AG04450 (cell line): ENCODE measurements at regions of chr17 and their contacts with region 1.

Region 1: GRCh38 chr17:76005263-76006149 is 4.9 kb downstream of the CDK3 start:
- DNase-seq: no peak
- H3K4me3 ChIP-seq: no peak overlapping the region
- H3K27ac ChIP-seq: peak overlapping the region; percentile 31
- H3K27me3 ChIP-seq: no peaks in the 10 kb centered on the region
- CTCF ChIP-seq: peak; percentile 66

Region 2: GRCh38 chr17:75904749-75905521 is 100.6 kb before region 1 on chr17 and contains the start of gene MRPL38:
- CTCF ChIA-PET with region 1: interaction called, 46 read pairs
- POLR2A ChIA-PET with region 1: interaction called, 5 read pairs
- DNase-seq: peak; percentile 80
- H3K4me3 ChIP-seq: peak within 1 kb of the TSS; percentile 75
- H3K27ac ChIP-seq: peak within 1 kb of the TSS; percentile 61
- H3K27me3 ChIP-seq: no peaks in the 10 kb centered on the region
- CTCF ChIP-seq: peak; percentile 83
- polyA plus RNA-seq, gene MRPL38: 16.6 and 21.9 TPM in 2 replicates

Region 3: DNA sequence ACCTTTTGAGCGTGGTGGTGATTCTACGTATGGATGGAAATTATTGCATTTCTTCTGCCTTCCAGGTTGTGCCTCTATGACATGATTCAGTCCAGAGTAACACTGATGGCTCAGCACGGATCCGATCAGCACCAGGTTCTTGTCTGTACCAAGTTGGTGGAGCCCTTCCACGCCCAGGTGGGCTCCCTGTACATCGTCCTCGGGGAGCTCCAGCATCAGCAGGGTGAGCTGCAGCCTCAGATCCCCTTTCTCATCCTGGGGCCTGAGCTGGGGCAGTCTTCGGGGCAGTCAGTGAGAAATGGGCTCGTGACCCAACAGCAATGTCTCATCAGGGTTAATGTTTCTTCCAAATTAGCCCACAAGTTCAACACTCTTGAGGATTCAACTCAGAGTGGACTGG is 14.1 kb before region 1 on chr17:
- CTCF ChIA-PET with region 1: interaction called, 12 read pairs
- POLR2A ChIA-PET with region 1: interaction called, 3 read pairs
- DNase-seq: no peak
- H3K4me3 ChIP-seq: no peak overlapping the region
- H3K27ac ChIP-seq: no peak overlapping the region
- H3K27me3 ChIP-seq: no peaks in the 10 kb centered on the region
- CTCF ChIP-seq: no peak

Region 4: GRCh38 chr17:76065754-76066153 is 60.2 kb after region 1 on chr17:
- CTCF ChIA-PET with region 1: interaction called, 11 read pairs
- POLR2A ChIA-PET with region 1: no interaction called
- DNase-seq: no peak
- H3K4me3 ChIP-seq: no peak overlapping the region
- H3K27ac ChIP-seq: no peak overlapping the region
- H3K27me3 ChIP-seq: no peaks in the 10 kb centered on the region
- CTCF ChIP-seq: no peak

Region 5: DNA sequence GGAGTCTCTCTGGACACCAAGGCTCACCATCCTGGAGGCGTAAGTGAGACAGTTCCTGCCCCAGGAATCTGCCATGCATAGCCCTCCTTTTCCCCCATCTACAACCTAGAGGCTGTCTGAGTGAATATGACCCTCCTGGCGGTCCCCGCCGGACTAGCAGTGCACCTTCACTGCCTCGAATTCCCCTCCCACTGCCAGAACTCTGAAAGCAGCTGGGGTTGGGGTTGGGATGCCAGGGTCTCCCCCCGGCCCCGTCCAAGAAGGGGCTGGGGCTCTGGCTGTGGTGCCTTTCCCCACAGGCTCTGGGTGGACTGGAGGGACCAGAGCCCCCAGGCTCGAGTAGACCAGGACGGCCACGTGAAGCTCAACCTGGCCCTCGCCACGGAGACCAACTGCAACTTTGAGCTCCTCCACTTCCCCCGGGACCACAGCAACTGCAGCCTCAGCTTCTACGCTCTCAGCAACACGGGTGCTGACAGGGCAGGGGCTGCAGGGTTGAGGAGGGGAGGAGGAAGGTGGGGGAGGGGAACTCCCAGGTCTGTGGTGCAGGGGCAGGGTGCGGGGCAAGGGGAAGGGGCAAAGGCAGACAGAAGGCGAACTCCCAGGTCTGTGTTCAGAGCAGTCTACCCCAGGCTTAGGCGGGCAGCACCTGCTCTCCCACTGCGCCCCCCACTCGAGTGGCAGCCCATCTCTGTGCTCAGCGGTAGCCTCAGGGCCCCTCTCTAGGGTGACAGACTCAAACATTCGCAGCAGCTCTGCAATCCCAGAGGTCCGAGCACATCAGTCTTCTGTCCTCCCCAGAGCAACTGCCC is 74.7 kb after region 1 on chr17:
- CTCF ChIA-PET with region 1: no interaction called
- POLR2A ChIA-PET with region 1: no interaction called
- DNase-seq: no peak
- H3K4me3 ChIP-seq: no peak overlapping the region
- H3K27ac ChIP-seq: no peak overlapping the region
- H3K27me3 ChIP-seq: peaks cover 53% of the 10 kb centered on the region
- CTCF ChIP-seq: peak; percentile 24; the same call in 1 of the 2 replicates